Motor neuron (in vitro differentiated cells): ENCODE measurements at regions of chr20 and their contacts with region 1.

Region 1: GRCh38 chr20:13147071-13147963 is 73.8 kb upstream of the ISM1 start:
- ATAC-seq: peak in 3 of 8 experiments; percentile 75 to 93 (median 90)
- H3K4me3 ChIP-seq: no peak overlapping the region
- H3K27ac ChIP-seq: no peak overlapping the region
- H3K4me1 ChIP-seq: no peaks in the 10 kb centered on the region

Region 2: DNA sequence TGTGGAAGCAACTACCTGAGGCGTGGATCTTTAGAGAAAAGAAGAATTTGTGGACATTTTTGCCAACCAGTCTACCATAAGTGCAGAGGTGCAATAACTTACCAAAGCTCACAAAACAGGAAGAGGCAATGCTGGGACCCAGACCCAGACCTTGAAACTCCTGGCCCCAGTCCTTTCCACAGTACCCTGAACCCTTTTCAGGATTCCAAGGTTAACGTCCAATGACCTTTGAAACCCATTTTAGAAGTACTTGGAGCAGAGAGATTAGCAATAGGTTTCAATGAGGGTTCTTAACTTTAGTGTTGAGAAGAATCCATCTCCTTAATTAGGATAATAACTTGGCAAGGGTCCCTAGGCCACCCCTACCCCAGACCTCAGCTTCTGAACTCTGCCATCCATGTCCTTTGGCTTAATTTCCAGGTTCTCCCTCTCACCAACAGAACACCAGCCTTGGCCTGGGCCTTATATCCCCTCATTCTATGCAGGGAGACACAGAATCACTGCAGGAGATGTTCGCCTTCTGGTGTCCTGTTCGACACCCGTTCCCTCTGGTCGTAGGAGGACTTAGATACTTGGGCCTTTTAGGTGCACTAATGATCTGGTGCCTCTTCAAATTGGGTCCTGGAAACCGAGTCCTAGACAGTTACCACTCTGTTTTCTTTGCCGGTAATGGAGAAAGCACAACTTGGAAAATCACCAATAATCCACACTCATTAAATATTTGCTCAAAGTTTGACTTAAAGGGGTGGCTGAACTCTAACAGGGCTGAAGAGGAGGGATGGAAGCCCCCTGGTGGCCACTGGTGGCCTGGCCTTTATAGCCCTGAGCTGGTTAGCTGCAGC is 114.4 kb after region 1 on chr20:
- in situ Hi-C with region 1: loop called in 1 of 9 experiments (anchors 25 kb)
- ATAC-seq: peak in 6 of 8 experiments; percentile 52 to 99 (median 89)
- H3K4me3 ChIP-seq: no peak overlapping the region
- H3K27ac ChIP-seq: no peak overlapping the region
- H3K4me1 ChIP-seq: peaks cover 0 to 9% of the 10 kb centered on the region in 2 donors

Region 3: GRCh38 chr20:13515796-13516558 is 368.7 kb after region 1 on chr20:
- in situ Hi-C with region 1: no loop called
- ATAC-seq: no peak
- H3K4me3 ChIP-seq: no peak overlapping the region
- H3K27ac ChIP-seq: no peak overlapping the region
- H3K4me1 ChIP-seq: no peaks in the 10 kb centered on the region